ENCODE measurements at regions of chr6 and their contacts with region 1.

Region 1: GRCh38 chr6:36594029-36594815 is at the start of gene SRSF3:
- DNase-seq: peak; percentile 84
- H3K4me3 ChIP-seq: peak within 1 kb of the TSS; percentile 70
- CTCF ChIP-seq: peak; percentile 63

Region 2: DNA sequence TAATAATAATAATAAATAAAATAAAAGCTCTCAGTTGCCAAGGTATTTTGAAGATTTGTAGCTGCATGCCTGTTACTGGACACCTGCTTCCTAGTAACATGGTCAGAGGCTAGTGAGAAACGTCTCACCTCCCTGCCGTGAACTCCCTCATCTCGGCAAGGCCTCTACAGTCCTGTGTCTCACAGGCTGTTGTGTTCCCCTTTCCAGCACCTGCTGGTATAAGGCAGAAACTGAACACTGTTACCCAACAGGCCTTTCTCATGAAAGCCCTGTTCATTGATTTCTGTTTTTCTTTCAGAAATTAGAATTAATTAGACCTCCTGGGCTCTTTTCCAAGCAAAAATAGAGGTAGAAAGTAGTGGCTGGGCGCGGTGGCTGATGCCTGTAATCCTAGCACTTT is 17.7 kb before region 1 on chr6:
- CTCF ChIA-PET with region 1: interaction called, 5 read pairs
- POLR2A ChIA-PET with region 1: interaction called, 29 read pairs
- DNase-seq: no peak
- H3K4me3 ChIP-seq: no peak overlapping the region
- CTCF ChIP-seq: no peak

Region 3: DNA sequence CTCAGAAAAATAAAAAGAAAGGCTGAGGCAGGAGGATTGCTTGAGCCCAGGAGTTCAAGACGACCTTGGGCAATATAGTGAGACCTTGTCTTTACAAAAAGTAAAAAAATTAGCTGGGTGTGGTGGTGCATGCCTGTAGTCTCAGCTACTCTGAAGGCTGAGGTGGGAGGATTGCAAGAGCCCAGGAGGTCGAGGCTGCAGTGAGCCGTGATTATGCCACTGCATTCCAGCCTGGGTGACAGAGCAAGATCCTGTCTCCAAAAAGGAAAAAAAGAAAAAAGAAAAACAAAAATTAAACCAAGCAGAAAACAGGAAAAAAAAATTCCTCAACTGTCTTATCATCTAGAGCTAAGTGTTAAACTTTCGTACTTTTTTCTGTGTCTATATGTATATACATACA is 12.5 kb before region 1 on chr6:
- CTCF ChIA-PET with region 1: interaction called, 5 read pairs
- POLR2A ChIA-PET with region 1: interaction called, 29 read pairs
- DNase-seq: no peak
- H3K4me3 ChIP-seq: no peak overlapping the region
- CTCF ChIP-seq: no peak

Region 4: DNA sequence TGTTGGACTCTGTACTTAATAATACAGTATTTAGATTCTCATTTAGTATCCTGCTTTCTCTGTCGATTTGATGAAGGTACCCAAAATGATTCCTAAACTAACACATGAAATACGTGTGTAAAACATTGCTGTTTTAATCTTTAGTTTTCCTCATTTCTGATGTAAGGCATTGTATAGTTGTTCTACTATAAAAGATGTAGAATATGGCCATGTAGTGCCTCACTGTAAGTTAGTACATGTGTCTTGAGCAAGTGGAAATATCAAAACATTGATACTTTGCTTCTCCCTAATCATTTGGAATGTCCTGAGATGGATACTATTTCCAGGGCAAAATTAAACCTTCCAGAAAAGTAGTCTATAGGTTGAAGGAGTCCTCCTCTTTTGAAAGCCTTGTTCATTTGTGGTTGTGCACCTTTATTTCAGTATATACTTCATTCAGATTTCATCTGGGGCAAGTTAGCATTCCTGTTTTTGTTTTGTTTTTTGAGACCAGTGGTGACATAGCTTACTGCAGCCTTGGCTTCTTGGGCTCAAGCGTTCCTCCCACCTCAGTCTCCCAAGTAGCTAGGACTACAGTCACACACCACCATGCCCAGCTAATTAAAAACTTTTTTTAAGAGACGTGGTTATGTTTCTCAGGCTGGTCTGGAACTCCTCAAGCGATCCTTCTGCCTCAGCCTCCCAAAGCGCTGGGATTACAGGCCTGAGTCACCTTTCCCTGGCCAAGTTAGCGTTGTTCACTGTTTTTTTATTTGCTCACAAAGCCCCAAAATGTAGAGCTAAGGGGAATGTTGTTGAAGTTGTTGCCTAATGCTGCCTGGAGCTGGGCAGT is 11.6 kb after region 1 on chr6:
- CTCF ChIA-PET with region 1: interaction called, 7 read pairs
- POLR2A ChIA-PET with region 1: interaction called, 56 read pairs
- DNase-seq: no peak
- H3K4me3 ChIP-seq: no peak overlapping the region
- CTCF ChIP-seq: no peak